Posterior cingulate gyrus (tissue), 11 donors: ENCODE measurements at regions of chr6 and their contacts with region 1.

Region 1: GRCh38 chr6:143450453-143451371 is at the starts of genes ADAT2 and PEX3:
- DNase-seq: peak; percentile 82 to 98 (median 88)

Region 2: DNA sequence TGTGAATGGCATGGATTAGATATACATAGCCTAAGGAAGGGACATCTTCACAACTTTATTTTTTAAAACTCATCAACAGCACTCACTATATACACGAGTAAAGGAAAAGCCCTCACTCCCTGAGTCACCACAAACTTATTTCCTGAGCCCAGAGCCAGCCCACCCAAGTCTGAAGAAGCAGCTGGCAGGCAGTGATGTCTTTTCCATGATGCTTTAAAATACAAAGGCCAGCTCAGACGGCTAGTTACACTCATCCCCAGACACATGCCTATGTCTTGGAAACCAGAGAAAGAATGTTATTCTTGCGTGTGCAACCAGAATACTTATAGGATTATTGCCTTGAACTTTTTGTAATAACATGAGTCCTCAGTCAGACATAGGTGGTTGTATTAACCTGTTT is 1034.5 kb before region 1 on chr6:
- intact Hi-C with region 1: no loop called
- DNase-seq: peak in 1 of 10 donors; percentile 27

Region 3: DNA sequence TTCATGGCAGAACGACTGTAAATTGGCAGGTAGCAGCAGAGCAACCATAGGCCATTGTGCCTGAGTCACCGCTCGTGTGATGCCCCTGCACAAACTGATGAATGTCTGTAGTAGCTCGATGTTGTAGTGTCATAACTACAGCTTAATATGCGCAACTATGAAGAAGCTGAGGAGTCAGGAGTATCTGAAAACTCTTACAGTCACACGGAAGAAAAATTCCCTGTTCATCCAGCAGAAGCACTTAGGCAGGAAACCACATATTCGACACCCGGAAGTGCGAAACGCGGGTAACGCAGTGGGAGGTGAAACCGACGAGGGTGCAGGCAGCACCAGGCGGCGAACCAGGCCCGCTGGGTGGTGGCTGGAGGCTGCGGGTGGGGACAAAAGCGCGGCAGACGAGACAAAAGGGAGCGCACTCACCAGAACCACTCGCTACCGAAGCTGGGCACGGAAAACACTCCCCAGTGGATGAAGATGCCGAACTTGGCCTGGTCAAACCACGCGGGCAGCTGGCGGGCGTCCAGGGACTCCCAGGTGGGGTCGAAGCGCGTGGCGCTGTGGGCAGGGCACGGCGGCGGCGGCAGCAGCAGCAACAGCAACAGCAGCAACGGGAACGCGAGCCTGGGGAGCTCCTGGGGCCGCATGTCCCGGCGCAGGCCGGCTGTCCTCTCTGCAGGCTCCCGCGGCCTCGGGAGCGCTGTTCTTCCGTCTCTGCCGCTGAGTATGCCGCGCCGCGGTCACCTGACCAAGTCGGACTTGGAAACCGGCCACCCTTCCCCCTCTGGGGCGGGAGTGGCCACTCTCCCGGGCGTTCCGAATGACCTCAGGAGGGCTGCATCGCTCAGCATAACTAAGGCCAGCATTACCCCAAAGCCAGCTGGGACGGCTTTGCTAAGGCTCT is 60.5 kb after region 1 on chr6 and contains the start of gene FUCA2:
- intact Hi-C with region 1: loop called (anchors 2 kb)
- DNase-seq: peak; percentile 79 to 98 (median 85)

Region 4: DNA sequence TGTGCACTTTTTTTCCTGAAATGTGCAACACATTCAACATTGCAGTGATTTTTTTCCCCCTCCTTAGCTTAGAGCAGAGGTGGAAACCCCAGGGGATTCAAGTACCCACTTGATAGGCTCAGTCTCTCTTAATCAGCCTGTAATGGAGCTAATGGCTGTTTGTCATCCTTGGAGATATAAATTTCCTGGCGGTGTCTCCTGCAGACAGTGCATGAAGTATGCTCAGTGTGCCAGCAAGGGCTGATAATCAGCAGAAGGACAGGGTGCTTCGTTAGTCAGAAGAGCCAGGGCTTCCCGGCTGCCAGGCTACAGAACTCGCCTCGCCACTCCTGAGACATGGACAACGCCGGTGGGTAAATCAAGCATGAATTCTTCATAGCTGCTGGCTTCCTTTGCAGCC is 157.3 kb after region 1 on chr6:
- intact Hi-C with region 1: no loop called
- DNase-seq: peak in 6 of 10 donors; percentile 20 to 86 (median 52)